Lower leg skin (tissue), 4 donors: ENCODE measurements at regions of chr1 and their contacts with region 1.

Region 1: GRCh38 chr1:200971955-200972711 is 51.4 kb downstream of the KIF21B start:
- DNase-seq: peak; percentile 40 to 92
- H3K4me3 ChIP-seq: no peak overlapping the region
- CTCF ChIP-seq: no peak
- POLR2A ChIP-seq: no peak

Region 2: DNA sequence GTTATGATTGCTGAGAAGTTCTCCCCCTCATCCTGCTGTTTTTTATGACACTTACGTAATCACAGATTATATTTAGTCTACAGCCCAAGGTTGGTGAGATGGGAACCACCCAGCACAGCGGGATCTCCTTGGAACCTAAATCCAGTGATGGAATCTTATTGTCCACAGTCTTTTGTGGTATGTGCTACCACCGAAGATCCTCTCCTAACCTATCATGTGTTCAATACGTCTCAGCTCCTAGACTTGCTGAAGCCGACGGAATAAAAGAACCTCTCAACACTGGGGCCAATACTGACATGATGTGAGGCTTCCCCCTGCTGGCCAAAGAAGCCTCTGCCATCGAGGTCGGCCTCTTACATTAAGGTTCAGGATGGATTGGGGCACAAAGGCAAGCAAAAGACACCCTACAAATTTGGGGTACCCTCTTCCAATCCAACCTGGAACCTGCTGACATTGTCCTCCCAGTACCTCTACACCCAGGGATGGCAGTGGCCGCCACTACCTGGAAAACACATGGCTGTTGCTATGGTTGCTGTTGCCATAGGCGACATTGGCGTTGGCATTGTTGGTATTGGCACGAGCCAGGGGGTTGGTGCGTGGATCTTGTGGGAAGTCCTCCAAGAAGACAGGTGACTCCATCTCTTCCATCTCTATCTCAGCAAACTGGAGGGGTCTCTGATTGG is 70.8 kb after region 1 on chr1:
- intact Hi-C with region 1: loop called (anchors 5 kb)
- DNase-seq: peak in 1 of 2 donors; percentile 44
- H3K4me3 ChIP-seq: no peak overlapping the region
- CTCF ChIP-seq: no peak
- POLR2A ChIP-seq: no peak

Region 3: GRCh38 chr1:201114236-201115131 is 142.4 kb after region 1 on chr1:
- intact Hi-C with region 1: loop called (anchors 5 kb)
- DNase-seq: peak; percentile 82 to 97
- H3K4me3 ChIP-seq: peak overlapping the region; percentile 32
- CTCF ChIP-seq: peak in 2 of 3 donors; percentile 10 to 49
- POLR2A ChIP-seq: no peak

Region 4: GRCh38 chr1:201818971-201819750 is 847.0 kb after region 1 on chr1:
- intact Hi-C with region 1: no loop called
- DNase-seq: no peak
- H3K4me3 ChIP-seq: no peak overlapping the region
- CTCF ChIP-seq: no peak
- POLR2A ChIP-seq: no peak